ENCODE measurements at regions of chr1 and their contacts with region 1.

Region 1: GRCh38 chr1:93878889-93879586 is at the start of gene DNTTIP2:
- DNase-seq: peak; percentile 87
- ATAC-seq: peak; percentile 96
- H3K4me3 ChIP-seq: peak within 1 kb of the TSS; percentile 84 to 97 (median 95)
- H3K27ac ChIP-seq: peak within 1 kb of the TSS; percentile 92
- H3K4me1 ChIP-seq: peaks cover 31% of the 10 kb centered on the region
- H3K27me3 ChIP-seq: no peaks in the 10 kb centered on the region; a peak in 1 of 5 replicates
- CTCF ChIP-seq: peak; percentile 22; the same call in 1 of the 2 replicates
- EP300 ChIP-seq: 0 out of 4 replicates have a peak, but pooled peaks of 1 of the 2 experiments have one; percentile 45
- POLR2A ChIP-seq: peak; percentile 95 to 99
- RAD21 ChIP-seq: no peak; the same call in 1 of the 2 replicates
- total RNA-seq, gene DNTTIP2: 63.3 and 93.0 TPM in 2 replicates

Region 2: GRCh38 chr1:93909146-93910050 is 30.4 kb after region 1 on chr1 and contains the start of gene GCLM:
- CTCF ChIA-PET with region 1: no interaction called
- POLR2A ChIA-PET with region 1: interaction called, 10 read pairs
- in situ Hi-C with region 1: no loop called
- intact Hi-C with region 1: no loop called
- DNase-seq: peak; percentile 88
- ATAC-seq: peak; percentile 93
- H3K4me3 ChIP-seq: peak within 1 kb of the TSS; percentile 74 to 92 (median 86)
- H3K27ac ChIP-seq: peak within 1 kb of the TSS; percentile 83
- H3K4me1 ChIP-seq: peaks cover 47% of the 10 kb centered on the region
- H3K27me3 ChIP-seq: no peaks in the 10 kb centered on the region; a peak in 1 of 5 replicates
- CTCF ChIP-seq: peak; percentile 91
- EP300 ChIP-seq: peak in 1 of 2 experiments; percentile 28; a peak in 2 of 4 replicates
- POLR2A ChIP-seq: peak in 1 of 2 experiments; percentile 32; a peak in 1 of 4 replicates
- RAD21 ChIP-seq: peak; percentile 94
- total RNA-seq, gene GCLM: 28.1 and 29.9 TPM in 2 replicates

Measured in HepG2 (cell line).